ENCODE measurements at regions of chr7 and their contacts with region 1.

Region 1: GRCh38 chr7:15007507-15007906 is 105.0 kb upstream of the DGKB start:
- DNase-seq: no peak
- H3K4me3 ChIP-seq: no peak overlapping the region
- H3K27ac ChIP-seq: no peak overlapping the region
- H3K4me1 ChIP-seq: no peaks in the 10 kb centered on the region
- H3K27me3 ChIP-seq: no peaks in the 10 kb centered on the region
- CTCF ChIP-seq: no peak
- POLR2A ChIP-seq: no peak

Region 2: GRCh38 chr7:13904007-13904406 is 1103.5 kb before region 1 on chr7:
- intact Hi-C with region 1: loop called (anchors 5 kb)
- DNase-seq: no peak
- H3K4me3 ChIP-seq: no peak overlapping the region
- H3K27ac ChIP-seq: no peak overlapping the region
- H3K4me1 ChIP-seq: no peaks in the 10 kb centered on the region
- H3K27me3 ChIP-seq: no peaks in the 10 kb centered on the region
- CTCF ChIP-seq: no peak
- POLR2A ChIP-seq: no peak

Measured in vagina (tissue), 2 donors.